Activated B cell treated with CpG ODN at 0.5 μM for 24 hours (primary cell): ENCODE measurements at regions of chr4 and their contacts with region 1.

Region 1: DNA sequence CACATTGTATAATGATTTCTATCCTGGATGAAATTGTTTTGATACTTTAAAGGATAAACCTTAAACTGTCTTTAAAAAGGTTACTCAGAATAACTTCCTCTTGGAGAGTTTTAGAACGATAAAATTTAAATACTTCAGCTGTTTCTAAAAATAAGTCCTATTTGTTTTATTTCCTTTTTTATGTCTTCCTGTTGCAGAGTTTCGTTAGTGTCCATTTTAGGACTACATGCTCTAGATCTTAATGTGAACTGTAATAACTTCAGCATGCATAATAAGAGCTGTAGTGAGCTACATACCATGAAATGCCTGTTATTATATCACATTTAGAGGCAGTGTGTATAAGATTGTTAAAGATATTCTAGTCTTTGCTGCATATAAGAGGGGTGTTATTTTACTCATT is 14.6 kb downstream of the ATP10D start:
- DNase-seq: no peak
- ATAC-seq: peak; percentile 76
- H3K4me3 Mint-ChIP-seq: no peak overlapping the region
- H3K27ac Mint-ChIP-seq: no peak overlapping the region
- H3K4me1 Mint-ChIP-seq: peaks cover 12% of the 10 kb centered on the region
- H3K27me3 Mint-ChIP-seq: no peaks in the 10 kb centered on the region
- CTCF ChIP-seq: no peak

Region 2: DNA sequence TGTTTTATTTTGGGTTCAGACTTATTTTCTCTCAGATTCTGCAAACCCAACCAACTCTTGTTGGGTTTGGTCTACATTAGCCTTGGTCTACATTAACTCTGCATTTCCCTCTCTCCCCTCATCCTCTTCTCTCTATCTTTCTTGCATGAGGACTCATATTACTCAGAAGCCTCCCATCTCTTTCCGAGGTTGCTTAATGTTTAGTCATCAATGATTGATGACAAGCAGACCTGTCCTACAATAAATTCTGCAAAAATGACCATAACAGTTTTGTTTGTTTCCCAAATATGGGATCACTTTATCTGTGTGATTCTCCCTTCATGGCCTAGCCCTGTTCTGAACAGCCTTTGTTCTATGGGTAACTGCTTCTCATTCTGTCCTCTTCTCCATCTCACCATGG is 393.1 kb before region 1 on chr4:
- CTCF ChIA-PET with region 1: no interaction called
- POLR2A ChIA-PET with region 1: no interaction called
- intact Hi-C with region 1: no loop called
- DNase-seq: no peak
- ATAC-seq: no peak
- H3K4me3 Mint-ChIP-seq: no peak overlapping the region
- H3K27ac Mint-ChIP-seq: no peak overlapping the region
- H3K4me1 Mint-ChIP-seq: no peaks in the 10 kb centered on the region
- H3K27me3 Mint-ChIP-seq: no peaks in the 10 kb centered on the region
- CTCF ChIP-seq: no peak

Region 3: DNA sequence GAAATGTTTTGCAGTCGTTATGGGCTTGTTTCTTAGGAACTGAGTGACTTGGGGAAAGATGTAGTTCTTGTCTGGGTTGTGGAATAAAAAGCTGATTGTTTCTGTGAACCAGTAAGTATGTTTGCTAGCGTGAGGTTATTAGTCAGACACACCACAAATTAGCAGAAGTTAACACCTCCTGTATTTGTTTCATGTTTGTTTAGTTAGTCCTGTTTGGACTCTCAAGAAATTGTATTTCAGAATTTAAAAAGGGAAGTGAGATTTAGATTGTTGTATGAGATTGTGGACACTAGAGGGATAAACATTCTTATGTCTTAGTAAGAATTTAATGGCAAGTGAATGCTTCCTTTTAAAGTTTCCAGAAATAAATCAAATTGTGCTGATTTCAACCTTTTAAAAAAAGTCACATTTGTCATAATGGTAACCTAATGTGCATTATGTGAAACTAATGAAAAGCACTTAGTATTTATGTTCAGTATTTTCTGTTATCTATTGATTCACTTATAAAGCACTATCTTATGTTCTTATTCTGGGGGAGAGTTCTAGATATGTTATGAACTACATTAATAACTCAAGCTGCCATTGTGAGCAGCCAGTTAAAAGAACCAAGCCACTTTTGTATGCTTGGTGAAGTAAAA is 10.9 kb after region 1 on chr4:
- CTCF ChIA-PET with region 1: interaction called, 3 read pairs
- POLR2A ChIA-PET with region 1: interaction called, 3 read pairs
- intact Hi-C with region 1: loop called (anchors 1 kb)
- DNase-seq: no peak
- ATAC-seq: peak; percentile 90
- H3K4me3 Mint-ChIP-seq: peak overlapping the region; percentile 21
- H3K27ac Mint-ChIP-seq: peak overlapping the region; percentile 76
- H3K4me1 Mint-ChIP-seq: peaks cover 70% of the 10 kb centered on the region
- H3K27me3 Mint-ChIP-seq: no peaks in the 10 kb centered on the region
- CTCF ChIP-seq: no peak

Region 4: GRCh38 chr4:47519239-47519883 is 19.7 kb after region 1 on chr4:
- CTCF ChIA-PET with region 1: no interaction called
- POLR2A ChIA-PET with region 1: no interaction called
- intact Hi-C with region 1: loop called (anchors 2 kb)
- DNase-seq: no peak
- ATAC-seq: peak; percentile 99
- H3K4me3 Mint-ChIP-seq: no peak overlapping the region
- H3K27ac Mint-ChIP-seq: peak overlapping the region; percentile 69
- H3K4me1 Mint-ChIP-seq: peaks cover 20% of the 10 kb centered on the region
- H3K27me3 Mint-ChIP-seq: no peaks in the 10 kb centered on the region
- CTCF ChIP-seq: no peak